HEK293T (cell line): ENCODE measurements at regions of chr1 and their contacts with region 1.

Region 1: GRCh38 chr1:158095737-158096335 is 84.9 kb upstream of the CD1D start:
- DNase-seq: peak; percentile 73

Region 2: DNA sequence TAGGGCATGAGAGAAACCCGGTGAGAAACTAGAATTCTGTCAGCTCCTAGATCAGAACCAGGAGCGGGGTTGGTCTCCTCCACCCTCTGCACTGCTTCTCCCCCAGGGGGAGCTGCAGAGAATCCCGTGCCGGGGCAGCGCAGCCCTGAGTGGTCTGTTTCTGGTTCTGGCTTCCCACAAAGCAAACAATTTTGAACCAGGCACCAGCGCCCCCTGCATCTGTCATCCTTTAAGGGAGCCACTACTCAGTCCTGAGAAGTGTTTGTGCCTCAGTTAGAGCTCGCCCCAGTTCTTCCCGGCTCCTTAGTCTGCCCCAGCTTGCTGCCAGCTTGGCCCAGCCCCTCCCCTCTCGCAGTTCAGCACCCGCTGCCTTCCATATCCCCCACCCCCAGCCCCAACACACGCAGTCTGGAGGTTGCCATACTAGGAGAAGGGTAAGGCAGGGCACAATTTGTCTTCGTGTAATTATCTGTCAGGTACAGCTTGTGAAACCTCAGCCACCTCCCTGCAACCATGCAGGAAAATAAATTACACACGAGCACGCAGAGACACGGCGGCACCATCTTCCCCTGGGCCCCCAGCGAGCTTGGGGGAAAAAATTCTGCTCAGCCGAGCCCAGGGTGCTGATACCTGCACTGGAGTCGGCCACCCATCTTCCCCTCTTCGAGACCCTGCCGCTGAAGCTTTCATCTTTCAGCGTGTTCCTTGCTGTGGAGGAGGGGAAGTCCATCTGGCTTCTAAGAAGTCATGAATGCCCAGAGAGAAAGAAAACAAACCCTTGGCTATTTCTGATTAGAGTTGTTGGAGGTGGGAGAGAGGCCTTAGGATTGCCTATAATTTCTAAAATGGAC is 22.2 kb after region 1 on chr1:
- CTCF ChIA-PET with region 1: interaction called, 15 read pairs
- POLR2A ChIA-PET with region 1: no interaction called
- DNase-seq: peak; percentile 51